Left colon (tissue), 2 donors: ENCODE measurements at regions of chrX and their contacts with region 1.

Region 1: DNA sequence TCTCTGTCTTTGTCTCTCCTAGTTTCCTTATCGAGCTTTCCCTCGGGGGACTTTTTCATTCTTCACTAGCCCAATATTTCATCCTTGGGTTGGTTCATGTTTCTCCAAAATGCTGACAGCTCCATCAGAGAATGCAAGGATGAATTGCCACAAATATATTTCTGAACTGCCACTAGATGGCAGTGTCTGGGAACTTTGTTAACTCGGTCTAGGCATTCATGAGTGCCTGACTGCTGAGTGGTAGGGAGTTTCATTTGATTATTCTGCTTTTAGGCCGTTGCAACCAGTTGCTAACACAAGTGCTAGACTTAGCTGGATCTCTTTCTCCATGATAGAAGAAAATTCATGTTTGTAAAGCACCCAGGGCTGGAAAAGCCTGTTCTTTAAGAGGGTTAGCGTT is 73.5 kb upstream of the RAP2C start:
- DNase-seq: no peak
- ATAC-seq: peak; percentile 65

Region 2: DNA sequence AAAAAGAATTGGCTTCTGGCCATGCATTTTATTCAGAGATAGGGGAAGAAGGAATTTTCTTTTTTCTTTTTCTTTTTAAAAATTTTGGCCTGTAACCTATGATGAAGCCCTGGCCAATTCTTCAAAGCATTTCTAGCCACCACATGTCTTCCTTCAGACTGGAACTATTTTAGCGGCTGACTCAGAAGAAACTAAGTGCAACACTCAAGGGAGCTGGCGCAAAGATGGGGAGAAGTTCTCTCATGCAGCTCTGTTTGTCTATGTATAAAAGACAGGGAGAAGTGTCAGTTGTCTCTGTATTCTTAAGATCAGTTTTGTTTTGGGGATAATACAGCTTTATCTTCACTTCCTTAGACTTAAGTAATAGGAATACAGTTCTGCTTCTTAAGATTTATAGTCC is 149.9 kb after region 1 on chrX:
- intact Hi-C with region 1: loop called in 1 of 2 experiments (anchors 10 kb)
- DNase-seq: no peak
- ATAC-seq: no peak

Region 3: DNA sequence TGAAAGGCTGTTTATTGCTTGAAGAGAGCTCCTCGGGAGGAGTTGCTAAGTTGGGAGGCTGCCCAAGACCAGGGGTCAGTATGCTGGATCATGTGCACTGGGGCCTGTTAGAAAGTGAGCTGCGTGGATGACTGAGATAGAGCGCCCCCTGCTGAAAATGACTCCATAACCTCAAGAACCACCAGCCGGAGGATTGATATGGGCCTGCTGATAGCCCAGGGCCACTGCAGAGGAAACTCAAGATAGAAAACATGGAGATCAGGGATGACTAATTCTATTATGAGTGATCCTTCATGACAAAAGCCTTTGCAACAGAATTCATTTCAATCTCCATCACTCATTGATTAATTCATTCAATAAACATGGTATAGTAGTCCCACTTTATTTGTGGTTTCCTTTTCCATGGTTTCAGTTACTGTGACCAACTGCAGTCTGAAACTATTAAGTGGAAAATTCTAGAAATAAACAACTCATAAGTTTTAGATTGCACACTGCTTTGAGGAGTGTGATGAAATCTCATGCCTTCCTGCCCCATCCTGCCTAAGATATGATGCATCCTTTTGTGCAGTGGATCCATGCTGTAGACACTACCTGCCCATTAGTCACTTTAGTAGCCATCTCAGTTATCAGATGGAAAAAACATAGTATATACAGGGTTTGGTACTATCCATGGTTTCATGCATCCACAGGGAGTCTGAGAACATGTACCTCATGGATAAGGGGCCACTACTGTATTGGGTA is 322.8 kb after region 1 on chrX:
- intact Hi-C with region 1: loop called in 1 of 2 experiments (anchors 10 kb)
- DNase-seq: peak in 1 of 2 donors; percentile 61
- ATAC-seq: peak; percentile 68

Region 4: DNA sequence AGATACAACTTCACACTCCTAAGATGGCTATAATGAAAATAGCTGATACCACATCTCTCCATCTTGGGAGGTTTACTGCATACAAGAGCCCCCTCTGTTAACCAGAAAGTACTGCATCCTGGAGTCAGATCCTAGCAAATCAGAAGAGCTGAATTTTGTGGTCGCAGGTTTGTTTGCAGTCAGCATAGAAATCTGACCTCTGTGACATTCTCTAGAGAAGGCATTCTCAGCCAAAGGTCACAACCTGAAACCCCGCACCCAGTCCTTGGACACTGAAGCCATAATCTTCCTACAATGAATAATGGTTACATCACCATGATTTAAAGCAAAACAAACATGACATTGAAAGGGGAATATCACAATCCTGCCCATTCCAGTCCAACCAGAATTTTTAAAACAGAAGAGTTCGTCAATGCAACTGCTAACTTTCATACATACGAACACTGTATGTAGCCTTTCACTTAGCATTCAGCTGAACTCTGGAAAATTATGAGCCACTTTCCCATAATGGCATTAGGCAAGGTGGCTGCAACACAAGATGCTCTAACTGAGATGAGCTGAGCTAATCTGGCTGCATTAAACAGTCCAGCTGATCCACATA is 648.0 kb after region 1 on chrX:
- intact Hi-C with region 1: no loop called
- DNase-seq: no peak
- ATAC-seq: no peak